ENCODE measurements at regions of chr9 and their contacts with region 1.

Region 1: GRCh38 chr9:93968451-93969327 is 13.5 kb upstream of the BARX1 start:
- DNase-seq: no peak
- ATAC-seq: no peak
- H3K4me3 ChIP-seq: no peak overlapping the region
- H3K4me3 Mint-ChIP-seq: no peak overlapping the region
- H3K27ac ChIP-seq: no peak overlapping the region
- H3K27ac Mint-ChIP-seq: no peak overlapping the region
- H3K4me1 ChIP-seq: no peaks in the 10 kb centered on the region
- H3K4me1 Mint-ChIP-seq: no peaks in the 10 kb centered on the region
- H3K27me3 ChIP-seq: no peaks in the 10 kb centered on the region
- H3K27me3 Mint-ChIP-seq: peaks cover 20 to 27% of the 10 kb centered on the region in 2 donors
- CTCF ChIP-seq: no peak

Region 2: GRCh38 chr9:93952784-93953495 is 15.7 kb before region 1 on chr9:
- intact Hi-C with region 1: loop called (anchors 2 kb)
- DNase-seq: no peak
- ATAC-seq: no peak
- H3K4me3 ChIP-seq: no peak overlapping the region
- H3K4me3 Mint-ChIP-seq: peak overlapping the region; percentile 65
- H3K27ac ChIP-seq: no peak overlapping the region
- H3K27ac Mint-ChIP-seq: no peak overlapping the region
- H3K4me1 ChIP-seq: peaks cover 50% of the 10 kb centered on the region
- H3K4me1 Mint-ChIP-seq: peaks cover 19 to 38% of the 10 kb centered on the region in 2 donors
- H3K27me3 ChIP-seq: peaks cover 71% of the 10 kb centered on the region
- H3K27me3 Mint-ChIP-seq: peaks cover 59 to 63% of the 10 kb centered on the region in 2 donors
- CTCF ChIP-seq: no peak